ENCODE measurements at regions of chr17 and their contacts with region 1.

Region 1: DNA sequence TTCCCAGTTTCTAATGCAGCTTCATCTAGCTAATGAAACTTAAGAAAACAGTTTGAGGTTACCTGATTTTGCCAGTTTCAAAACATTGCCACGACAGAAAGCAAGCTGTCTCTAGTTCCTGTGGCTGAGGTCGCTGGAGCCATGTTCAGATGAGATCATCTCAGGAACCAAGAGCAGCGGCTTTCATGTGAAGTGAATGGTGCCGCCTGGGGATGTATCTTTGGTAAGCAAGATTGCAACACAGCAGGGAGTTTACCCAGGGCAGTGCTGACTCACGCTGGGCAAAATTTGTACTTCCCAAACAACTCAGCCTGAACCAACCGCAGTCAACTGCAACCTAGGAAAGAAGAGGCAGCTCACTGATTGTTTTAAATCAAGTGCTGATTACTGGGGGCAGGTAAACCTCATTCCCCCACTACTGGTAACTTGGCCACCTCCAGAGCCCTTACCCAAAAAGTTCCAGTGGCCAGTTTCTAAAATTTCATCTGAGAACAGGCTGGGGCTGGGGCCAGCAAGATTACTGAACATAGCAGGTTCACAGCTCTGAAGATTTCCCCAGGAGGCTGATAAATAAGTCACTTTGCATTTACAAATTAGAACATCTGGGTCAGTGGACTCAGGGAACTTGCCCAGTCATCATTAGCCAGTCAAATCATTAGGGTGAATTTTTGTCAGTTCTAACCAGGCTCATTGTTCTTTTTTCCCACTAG is at the start of gene RFFL:
- DNase-seq: peak; percentile 88
- ATAC-seq: peak; percentile 98
- total RNA-seq, gene RFFL: 11.2 TPM

Region 2: GRCh38 chr17:35022536-35023063 is 41.1 kb before region 1 on chr17:
- intact Hi-C with region 1: loop called (anchors 2 kb)
- DNase-seq: peak; percentile 79
- ATAC-seq: peak; percentile 93

Measured in Right ventricle myocardium inferior (tissue), 1 donor.